ENCODE measurements at regions of chr2 and their contacts with region 1.

Region 1: DNA sequence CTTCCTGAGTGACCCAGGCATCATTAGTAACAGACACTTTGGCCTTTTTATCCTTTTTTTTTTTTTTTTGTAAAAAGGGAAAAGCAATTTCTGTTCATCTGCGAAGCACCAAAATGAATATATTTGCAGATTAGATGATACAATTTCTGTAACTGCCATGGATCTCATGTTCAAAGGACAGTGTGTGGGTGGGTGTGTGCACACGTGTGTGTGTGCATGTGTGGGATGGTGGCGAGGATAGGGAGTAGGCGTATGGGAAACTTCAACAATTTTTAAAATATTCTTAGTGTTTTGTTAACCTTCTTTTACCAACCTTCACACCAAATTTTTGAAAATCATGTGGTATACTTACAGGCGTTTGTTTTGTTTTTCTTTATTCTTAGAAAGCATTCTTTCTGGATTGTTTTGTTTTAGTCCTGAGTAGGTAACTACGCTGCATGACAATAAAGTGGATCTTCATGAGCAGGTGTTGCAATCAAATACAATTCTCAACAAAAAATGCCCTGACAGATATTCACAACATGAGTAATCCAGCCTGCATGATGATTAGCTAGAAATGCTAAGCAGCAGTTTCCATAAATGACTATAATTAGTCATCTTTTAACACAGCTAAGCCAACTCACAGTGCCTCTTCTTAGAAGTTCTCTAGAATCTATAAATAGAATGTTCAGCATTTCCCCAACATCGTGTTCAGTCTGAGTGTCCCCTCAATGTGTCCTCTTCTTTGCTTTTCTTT is 53.5 kb upstream of the RMDN2 start:
- DNase-seq: no peak
- H3K4me3 ChIP-seq: no peak overlapping the region
- H3K27ac ChIP-seq: no peak overlapping the region
- H3K4me1 ChIP-seq: peaks cover 5% of the 10 kb centered on the region
- H3K27me3 ChIP-seq: no peaks in the 10 kb centered on the region
- CTCF ChIP-seq: no peak
- EP300 ChIP-seq: no peak
- POLR2A ChIP-seq: no peak

Region 2: GRCh38 chr2:37837628-37838328 is 33.8 kb before region 1 on chr2:
- intact Hi-C with region 1: loop called in 1 of 4 experiments (anchors 5 kb)
- DNase-seq: peak in 1 of 5 donors; percentile 65
- H3K4me3 ChIP-seq: no peak overlapping the region
- H3K27ac ChIP-seq: no peak overlapping the region
- H3K4me1 ChIP-seq: no peaks in the 10 kb centered on the region
- H3K27me3 ChIP-seq: no peaks in the 10 kb centered on the region
- CTCF ChIP-seq: no peak
- EP300 ChIP-seq: no peak
- POLR2A ChIP-seq: no peak

Region 3: DNA sequence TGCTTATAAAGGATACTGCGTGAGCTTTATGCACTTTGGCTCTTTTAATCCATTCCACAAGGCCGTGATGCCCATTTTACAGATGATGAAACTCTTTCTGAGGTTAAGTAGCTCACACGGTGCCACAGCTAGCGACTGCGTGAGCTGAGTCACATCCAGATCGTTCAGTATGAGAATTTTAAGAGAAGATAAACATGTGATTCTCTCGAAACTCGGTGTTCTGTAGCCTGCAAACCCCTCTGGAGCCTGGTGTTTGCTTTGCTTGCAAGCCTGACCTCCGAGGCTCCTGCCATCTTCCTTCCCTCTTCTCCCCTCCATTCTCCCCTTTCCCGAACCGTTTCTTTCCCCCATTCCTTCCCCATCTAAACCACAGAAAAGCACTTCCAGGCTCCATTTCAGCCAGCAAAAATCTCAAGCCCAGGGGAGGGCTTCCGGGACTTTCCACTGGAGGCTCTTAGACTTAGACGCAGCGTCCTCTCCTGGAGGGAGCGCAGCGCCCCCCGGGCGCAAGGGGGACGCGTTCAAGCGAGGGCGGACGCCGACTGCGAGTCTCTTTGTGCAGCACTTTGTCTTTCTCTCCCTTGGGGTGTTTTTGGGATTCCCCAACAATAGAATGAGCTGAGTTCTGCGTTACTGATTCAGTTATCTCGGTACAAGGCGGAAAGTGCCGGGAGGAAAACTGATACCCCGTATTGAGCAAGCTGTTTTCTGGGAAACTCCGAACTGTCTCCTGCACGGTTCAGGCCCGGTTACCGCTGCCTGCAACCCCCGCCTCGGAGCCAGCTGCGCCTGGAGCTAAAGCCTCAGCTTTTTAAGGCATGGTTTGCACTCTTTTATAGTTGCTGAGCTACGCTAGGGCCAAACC is 166.4 kb after region 1 on chr2:
- intact Hi-C with region 1: no loop called
- DNase-seq: peak; percentile 43 to 55 (median 45)
- H3K4me3 ChIP-seq: peak overlapping the region; percentile 20
- H3K27ac ChIP-seq: peak overlapping the region; percentile 28 to 53
- H3K4me1 ChIP-seq: peaks cover 3% of the 10 kb centered on the region
- H3K27me3 ChIP-seq: no peaks in the 10 kb centered on the region
- CTCF ChIP-seq: no peak
- EP300 ChIP-seq: no peak
- POLR2A ChIP-seq: no peak

Measured in ovary (tissue), 10 donors.